Tibial artery (tissue), 4 donors: ENCODE measurements at regions of chr2 and their contacts with region 1.

Region 1: GRCh38 chr2:236731878-236732580 is 162.4 kb downstream of the ACKR3 start:
- DNase-seq: peak; percentile 91 to 94
- H3K4me3 ChIP-seq: no peak overlapping the region
- H3K27ac ChIP-seq: peak overlapping the region; percentile 66 to 73
- H3K4me1 ChIP-seq: peaks cover 0 to 16% (median 14%) of the 10 kb centered on the region in 4 donors
- H3K27me3 ChIP-seq: no peaks in the 10 kb centered on the region
- CTCF ChIP-seq: no peak

Region 2: DNA sequence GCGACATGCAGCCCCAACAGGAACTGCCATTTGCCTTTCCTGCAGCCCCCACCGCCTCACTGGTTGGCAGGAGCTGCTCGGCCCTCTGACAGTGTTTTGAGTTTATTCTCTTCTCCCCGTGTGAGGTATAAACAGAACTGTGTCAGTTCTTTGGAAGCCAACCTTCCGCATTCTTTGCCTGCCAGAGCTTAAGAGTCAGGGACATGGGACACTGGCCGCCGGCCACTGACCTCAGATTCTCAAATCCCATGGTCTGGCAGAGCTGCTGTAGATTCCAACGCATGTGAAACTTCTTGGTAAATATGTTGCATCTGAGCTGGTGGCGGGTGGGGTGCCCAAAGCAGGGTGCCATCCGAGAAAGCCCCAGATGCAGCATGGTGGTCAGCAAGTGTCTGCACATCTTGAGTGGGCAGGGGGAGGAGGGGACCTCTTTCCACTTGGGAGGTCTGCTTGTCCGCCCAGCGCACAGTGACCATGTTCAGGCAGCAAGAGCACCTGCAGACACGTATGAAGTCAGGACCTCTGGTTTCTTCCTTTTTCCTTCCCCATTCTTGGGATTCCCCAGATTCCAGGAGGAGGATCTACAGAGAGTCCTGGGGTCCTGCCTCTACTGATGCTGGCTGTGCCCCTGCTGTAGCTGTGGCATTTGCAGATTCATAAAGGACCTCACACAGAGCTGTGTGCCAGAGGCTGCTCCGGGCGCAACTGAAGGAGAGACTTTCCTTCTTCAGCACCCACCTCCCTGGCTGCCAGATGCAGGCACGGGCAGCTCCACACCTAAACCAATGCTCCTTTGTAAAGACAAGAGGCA is 491.6 kb before region 1 on chr2:
- intact Hi-C with region 1: no loop called
- DNase-seq: peak in 1 of 2 donors; percentile 73
- H3K4me3 ChIP-seq: no peak overlapping the region
- H3K27ac ChIP-seq: peak overlapping the region; percentile 47 to 50
- H3K4me1 ChIP-seq: peaks cover 0 to 24% (median 11%) of the 10 kb centered on the region in 4 donors
- H3K27me3 ChIP-seq: peaks cover 0 to 28% of the 10 kb centered on the region in 2 donors
- CTCF ChIP-seq: no peak

Region 3: GRCh38 chr2:236659758-236660150 is 72.3 kb before region 1 on chr2:
- intact Hi-C with region 1: loop called (anchors 10 kb)
- DNase-seq: peak in 1 of 2 donors; percentile 11
- H3K4me3 ChIP-seq: no peak overlapping the region
- H3K27ac ChIP-seq: no peak overlapping the region
- H3K4me1 ChIP-seq: peaks cover 0 to 42% (median 33%) of the 10 kb centered on the region in 4 donors
- H3K27me3 ChIP-seq: no peaks in the 10 kb centered on the region
- CTCF ChIP-seq: no peak

Region 4: GRCh38 chr2:236745420-236746197 is 13.6 kb after region 1 on chr2:
- intact Hi-C with region 1: no loop called
- DNase-seq: peak; percentile 49 to 83
- H3K4me3 ChIP-seq: no peak overlapping the region
- H3K27ac ChIP-seq: peak overlapping the region; percentile 55 to 67
- H3K4me1 ChIP-seq: peaks cover 0 to 41% (median 9%) of the 10 kb centered on the region in 4 donors
- H3K27me3 ChIP-seq: no peaks in the 10 kb centered on the region
- CTCF ChIP-seq: peak in 1 of 2 experiments; percentile 13